Activated naive CD4-positive, alpha-beta T cell treated with anti-CD3 and anti-CD28 coated beads for 36 hours (primary cell): ENCODE measurements at regions of chr11 and their contacts with region 1.

Region 1: GRCh38 chr11:6603287-6604080 is at the starts of genes ILK and RRP8:
- DNase-seq: peak; percentile 92
- H3K4me3 Mint-ChIP-seq: no peak within 1 kb of the TSS
- H3K27ac Mint-ChIP-seq: no peak within 1 kb of the TSS
- H3K4me1 Mint-ChIP-seq: peaks cover 33% of the 10 kb centered on the region
- H3K27me3 Mint-ChIP-seq: no peaks in the 10 kb centered on the region
- total RNA-seq, gene ILK: 65.2 to 65.7 TPM
- total RNA-seq, gene RRP8: 31.9 to 33.5 TPM

Region 2: GRCh38 chr11:5684646-5685362 is 918.7 kb before region 1 on chr11 and contains the start of gene TRIM5:
- CTCF ChIA-PET with region 1: no interaction called
- intact Hi-C with region 1: loop called (anchors 5 kb)
- DNase-seq: peak; percentile 92
- H3K4me3 Mint-ChIP-seq: peak within 1 kb of the TSS; percentile 96
- H3K27ac Mint-ChIP-seq: peak within 1 kb of the TSS; percentile 95
- H3K4me1 Mint-ChIP-seq: peaks cover 42% of the 10 kb centered on the region
- H3K27me3 Mint-ChIP-seq: no peaks in the 10 kb centered on the region
- total RNA-seq, gene TRIM5: 37.2 to 38.0 TPM

Region 3: DNA sequence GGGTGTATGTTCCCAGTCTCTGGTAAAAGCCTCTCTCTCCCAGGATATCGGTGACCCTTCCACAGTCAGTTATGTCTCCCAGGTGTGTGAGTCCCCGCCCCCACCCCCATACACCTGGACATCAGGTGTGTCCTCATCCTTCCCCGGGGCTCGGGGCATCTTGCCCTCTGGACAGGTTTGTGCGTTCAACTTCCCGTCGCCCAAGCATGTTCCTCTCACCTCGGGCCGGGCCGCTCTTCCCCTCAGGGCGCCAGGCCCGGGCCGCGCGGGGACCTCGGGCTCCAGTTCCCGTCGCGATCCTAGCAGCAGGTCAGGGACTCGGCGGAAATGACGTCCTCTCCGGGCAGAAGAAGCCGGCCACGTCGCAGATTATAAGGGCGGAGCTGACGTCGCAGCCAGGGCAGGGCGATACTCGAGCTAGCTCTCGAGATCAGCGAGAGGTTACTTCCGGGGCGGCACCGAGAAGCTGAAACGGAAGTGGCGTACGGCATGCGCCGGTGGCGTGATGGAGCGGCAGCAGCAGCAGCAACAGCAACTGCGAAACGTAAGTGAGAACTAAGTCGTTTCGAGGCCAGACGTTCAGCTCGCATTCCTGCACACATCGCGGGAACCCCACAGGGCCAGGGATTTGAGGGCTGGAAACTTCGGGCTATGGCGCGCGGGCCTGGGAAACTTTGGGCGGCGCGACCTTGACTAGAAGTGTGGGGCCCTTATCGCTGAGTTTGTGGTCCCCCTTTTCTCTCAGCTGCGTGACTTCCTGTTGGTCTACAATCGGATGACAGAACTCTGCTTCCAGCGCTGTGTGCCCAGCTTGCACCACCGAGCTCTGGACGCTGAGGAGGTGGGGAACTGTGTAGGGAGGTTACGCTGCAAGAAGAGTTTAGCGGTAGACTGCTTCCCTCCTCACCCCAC is 122.2 kb before region 1 on chr11 and contains the starts of genes ARFIP2 and TIMM10B:
- CTCF ChIA-PET with region 1: no interaction called
- intact Hi-C with region 1: loop called (anchors 1 kb)
- DNase-seq: peak; percentile 99
- H3K4me3 Mint-ChIP-seq: peak within 1 kb of the TSS; percentile 94
- H3K27ac Mint-ChIP-seq: peak within 1 kb of the TSS; percentile 96
- H3K4me1 Mint-ChIP-seq: peaks cover 38% of the 10 kb centered on the region
- H3K27me3 Mint-ChIP-seq: no peaks in the 10 kb centered on the region
- total RNA-seq, gene ARFIP2: 33.5 to 37.9 TPM
- total RNA-seq, gene TIMM10B: 35.1 to 41.7 TPM

Region 4: GRCh38 chr11:6619004-6619745 is 15.7 kb after region 1 on chr11 and contains the start of gene TPP1:
- CTCF ChIA-PET with region 1: interaction called, 22 read pairs
- intact Hi-C with region 1: loop called (anchors 2 kb)
- DNase-seq: peak; percentile 94
- H3K4me3 Mint-ChIP-seq: no peak within 1 kb of the TSS
- H3K27ac Mint-ChIP-seq: no peak within 1 kb of the TSS
- H3K4me1 Mint-ChIP-seq: peaks cover 3% of the 10 kb centered on the region
- H3K27me3 Mint-ChIP-seq: no peaks in the 10 kb centered on the region
- total RNA-seq, gene TPP1: 25.7 to 28.5 TPM

Region 5: GRCh38 chr11:6693342-6694228 is 90.1 kb after region 1 on chr11:
- CTCF ChIA-PET with region 1: interaction called, 8 read pairs
- intact Hi-C with region 1: loop called (anchors 1 kb)
- DNase-seq: peak; percentile 84
- H3K4me3 Mint-ChIP-seq: no peak overlapping the region
- H3K27ac Mint-ChIP-seq: peak overlapping the region; percentile 37
- H3K4me1 Mint-ChIP-seq: peaks cover 38% of the 10 kb centered on the region
- H3K27me3 Mint-ChIP-seq: no peaks in the 10 kb centered on the region

Region 6: GRCh38 chr11:6746086-6746618 is 142.7 kb after region 1 on chr11:
- CTCF ChIA-PET with region 1: no interaction called
- intact Hi-C with region 1: loop called (anchors 1 kb)
- DNase-seq: peak; percentile 60
- H3K4me3 Mint-ChIP-seq: no peak overlapping the region
- H3K27ac Mint-ChIP-seq: no peak overlapping the region
- H3K4me1 Mint-ChIP-seq: peaks cover 28% of the 10 kb centered on the region
- H3K27me3 Mint-ChIP-seq: no peaks in the 10 kb centered on the region